B cell (primary cell): ENCODE measurements at regions of chr1 and their contacts with region 1.

Region 1: GRCh38 chr1:235415008-235415904 is 48.0 kb downstream of the TBCE start:
- DNase-seq: peak; percentile 70
- ATAC-seq: peak; percentile 76
- H3K4me3 ChIP-seq: no peak overlapping the region
- H3K4me3 Mint-ChIP-seq: no peak overlapping the region
- H3K27ac ChIP-seq: no peak overlapping the region
- H3K27ac Mint-ChIP-seq: no peak overlapping the region
- H3K4me1 ChIP-seq: no peaks in the 10 kb centered on the region
- H3K4me1 Mint-ChIP-seq: no peaks in the 10 kb centered on the region
- H3K27me3 ChIP-seq: no peaks in the 10 kb centered on the region
- H3K27me3 Mint-ChIP-seq: no peaks in the 10 kb centered on the region
- CTCF ChIP-seq: peak; percentile 91

Region 2: DNA sequence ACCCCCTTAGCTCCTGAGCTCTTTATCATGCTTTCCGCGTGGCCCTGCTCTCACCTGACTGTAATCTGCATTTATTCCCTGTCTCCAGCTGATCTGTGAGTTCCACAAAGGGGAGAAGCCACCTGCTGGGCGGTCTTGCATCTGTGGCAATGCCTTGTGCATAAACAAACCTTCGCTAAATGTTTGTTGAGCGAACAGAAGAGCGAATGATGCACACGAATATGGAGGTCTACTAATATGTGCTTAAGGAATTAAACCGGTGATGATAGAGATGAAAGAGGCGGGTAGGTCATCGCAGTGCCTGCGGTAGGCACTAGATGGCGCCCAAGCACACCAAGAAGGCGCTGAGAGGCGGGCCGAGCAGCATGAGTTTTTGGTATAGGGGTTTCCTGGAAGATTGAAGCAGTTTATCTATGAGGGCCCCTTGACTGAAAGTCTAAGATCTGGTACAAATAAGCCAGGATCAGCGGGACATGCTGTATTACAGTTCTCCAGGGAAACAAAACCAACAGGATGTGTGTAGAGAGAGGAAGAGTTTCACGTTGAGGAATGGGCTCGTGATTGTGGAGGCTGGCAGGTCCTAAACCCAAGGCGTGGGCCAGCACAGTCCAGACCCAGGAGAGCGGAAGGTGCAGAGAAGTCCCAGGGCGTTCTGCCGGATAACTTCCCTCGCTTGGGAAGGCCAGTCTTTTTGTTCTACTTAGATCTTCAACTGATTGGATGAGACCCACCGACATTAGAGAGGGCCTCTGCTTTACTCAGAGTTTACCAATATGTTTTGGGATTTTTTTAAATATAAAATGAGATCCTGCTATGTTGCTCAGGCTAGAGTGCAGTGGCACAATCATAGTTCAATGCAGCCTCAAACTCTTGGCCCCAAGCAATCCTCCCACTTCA is 321.3 kb before region 1 on chr1:
- CTCF ChIA-PET with region 1: interaction called, 35 read pairs
- POLR2A ChIA-PET with region 1: no interaction called
- intact Hi-C with region 1: loop called (anchors 1 kb)
- DNase-seq: peak; percentile 84
- ATAC-seq: peak; percentile 99
- H3K4me3 ChIP-seq: no peak overlapping the region
- H3K4me3 Mint-ChIP-seq: no peak overlapping the region
- H3K27ac ChIP-seq: no peak overlapping the region
- H3K27ac Mint-ChIP-seq: peak overlapping the region; percentile 2
- H3K4me1 ChIP-seq: peaks cover 0 to 7% of the 10 kb centered on the region in 2 donors
- H3K4me1 Mint-ChIP-seq: peaks cover 5% of the 10 kb centered on the region
- H3K27me3 ChIP-seq: no peaks in the 10 kb centered on the region
- H3K27me3 Mint-ChIP-seq: peaks cover 5% of the 10 kb centered on the region
- CTCF ChIP-seq: peak; percentile 98

Region 3: GRCh38 chr1:235199441-235199840 is 215.8 kb before region 1 on chr1:
- CTCF ChIA-PET with region 1: interaction called, 13 read pairs
- POLR2A ChIA-PET with region 1: no interaction called
- intact Hi-C with region 1: no loop called
- DNase-seq: no peak
- ATAC-seq: no peak
- H3K4me3 ChIP-seq: no peak overlapping the region
- H3K4me3 Mint-ChIP-seq: no peak overlapping the region
- H3K27ac ChIP-seq: no peak overlapping the region
- H3K27ac Mint-ChIP-seq: no peak overlapping the region
- H3K4me1 ChIP-seq: no peaks in the 10 kb centered on the region
- H3K4me1 Mint-ChIP-seq: no peaks in the 10 kb centered on the region
- H3K27me3 ChIP-seq: no peaks in the 10 kb centered on the region
- H3K27me3 Mint-ChIP-seq: no peaks in the 10 kb centered on the region
- CTCF ChIP-seq: no peak

Region 4: GRCh38 chr1:235253219-235253962 is 161.9 kb before region 1 on chr1:
- CTCF ChIA-PET with region 1: interaction called, 141 read pairs
- POLR2A ChIA-PET with region 1: interaction called, 3 read pairs
- intact Hi-C with region 1: loop called (anchors 1 kb)
- DNase-seq: peak; percentile 76
- ATAC-seq: peak; percentile 86
- H3K4me3 ChIP-seq: no peak overlapping the region
- H3K4me3 Mint-ChIP-seq: no peak overlapping the region
- H3K27ac ChIP-seq: peak overlapping the region in 1 of 2 donors; percentile 19
- H3K27ac Mint-ChIP-seq: no peak overlapping the region
- H3K4me1 ChIP-seq: peaks cover 1 to 2% of the 10 kb centered on the region in 2 donors
- H3K4me1 Mint-ChIP-seq: peaks cover 11% of the 10 kb centered on the region
- H3K27me3 ChIP-seq: no peaks in the 10 kb centered on the region
- H3K27me3 Mint-ChIP-seq: no peaks in the 10 kb centered on the region
- CTCF ChIP-seq: peak; percentile 94

Region 5: GRCh38 chr1:235357485-235358378 is 57.5 kb before region 1 on chr1:
- CTCF ChIA-PET with region 1: no interaction called
- POLR2A ChIA-PET with region 1: no interaction called
- intact Hi-C with region 1: no loop called
- DNase-seq: no peak
- ATAC-seq: no peak
- H3K4me3 ChIP-seq: no peak overlapping the region
- H3K4me3 Mint-ChIP-seq: no peak overlapping the region
- H3K27ac ChIP-seq: no peak overlapping the region
- H3K27ac Mint-ChIP-seq: no peak overlapping the region
- H3K4me1 ChIP-seq: no peaks in the 10 kb centered on the region
- H3K4me1 Mint-ChIP-seq: no peaks in the 10 kb centered on the region
- H3K27me3 ChIP-seq: no peaks in the 10 kb centered on the region
- H3K27me3 Mint-ChIP-seq: no peaks in the 10 kb centered on the region
- CTCF ChIP-seq: no peak

Region 6: GRCh38 chr1:235404195-235404594 is 11.1 kb before region 1 on chr1:
- CTCF ChIA-PET with region 1: interaction called, 11 read pairs
- POLR2A ChIA-PET with region 1: no interaction called
- intact Hi-C with region 1: no loop called
- DNase-seq: no peak
- ATAC-seq: no peak
- H3K4me3 ChIP-seq: no peak overlapping the region
- H3K4me3 Mint-ChIP-seq: no peak overlapping the region
- H3K27ac ChIP-seq: no peak overlapping the region
- H3K27ac Mint-ChIP-seq: no peak overlapping the region
- H3K4me1 ChIP-seq: no peaks in the 10 kb centered on the region
- H3K4me1 Mint-ChIP-seq: no peaks in the 10 kb centered on the region
- H3K27me3 ChIP-seq: no peaks in the 10 kb centered on the region
- H3K27me3 Mint-ChIP-seq: no peaks in the 10 kb centered on the region
- CTCF ChIP-seq: no peak